ENCODE measurements at regions of chr6 and their contacts with region 1.

Region 1: DNA sequence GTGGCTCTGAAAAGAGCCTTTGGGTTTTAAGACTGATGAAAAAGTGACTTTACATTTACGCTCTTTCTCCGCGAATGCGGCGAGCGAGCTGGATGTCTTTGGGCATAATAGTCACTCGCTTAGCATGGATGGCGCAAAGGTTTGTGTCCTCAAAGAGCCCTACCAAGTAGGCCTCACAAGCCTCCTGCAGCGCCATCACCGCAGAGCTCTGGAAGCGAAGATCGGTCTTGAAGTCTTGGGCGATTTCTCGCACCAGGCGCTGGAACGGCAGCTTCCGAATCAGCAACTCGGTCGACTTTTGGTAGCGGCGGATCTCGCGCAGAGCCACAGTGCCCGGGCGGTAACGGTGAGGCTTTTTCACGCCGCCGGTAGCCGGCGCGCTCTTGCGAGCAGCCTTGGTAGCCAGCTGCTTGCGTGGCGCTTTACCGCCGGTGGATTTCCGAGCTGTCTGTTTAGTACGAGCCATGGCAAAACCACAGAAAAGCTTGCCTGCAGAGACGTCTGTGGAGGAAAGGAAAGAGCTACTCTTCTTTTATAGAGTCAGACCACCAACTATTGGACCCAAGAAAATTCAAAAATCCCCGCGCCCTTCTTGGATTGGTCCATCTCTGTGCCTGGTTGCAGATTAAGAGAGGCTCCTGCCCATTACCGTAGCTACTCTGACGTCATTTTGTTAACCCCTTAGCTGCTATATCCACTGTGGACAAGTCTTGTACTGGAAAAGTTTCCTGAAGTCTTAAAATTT is 55.5 kb upstream of the HFE start:
- DNase-seq: peak; percentile 85

Region 2: GRCh38 chr6:25472306-25472705 is 559.5 kb before region 1 on chr6:
- CTCF ChIA-PET with region 1: no interaction called
- POLR2A ChIA-PET with region 1: no interaction called
- DNase-seq: peak; percentile 24

Region 3: DNA sequence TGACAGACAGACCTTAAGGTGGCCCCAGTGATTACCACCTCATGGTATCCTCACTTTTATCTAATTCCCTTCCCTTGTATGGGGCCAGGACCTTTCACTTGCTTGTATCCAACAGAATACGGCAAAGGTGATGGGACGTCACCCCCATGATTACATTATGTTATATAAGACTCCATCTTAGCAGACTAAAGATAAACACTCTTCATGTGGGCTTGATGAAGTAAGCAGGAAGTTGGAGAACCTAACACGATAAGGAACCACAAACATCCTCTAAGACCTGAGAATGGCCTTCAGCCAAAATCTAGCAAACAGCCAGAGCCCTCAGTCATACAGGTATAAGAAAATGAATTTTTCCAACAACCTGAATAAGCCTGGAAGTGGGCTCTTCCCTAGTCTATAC is 165.8 kb before region 1 on chr6:
- CTCF ChIA-PET with region 1: no interaction called
- POLR2A ChIA-PET with region 1: no interaction called
- DNase-seq: no peak

Region 4: GRCh38 chr6:25992413-25993037 is 39.2 kb before region 1 on chr6:
- CTCF ChIA-PET with region 1: interaction called, 7 read pairs
- POLR2A ChIA-PET with region 1: interaction called, 33 read pairs
- DNase-seq: peak; percentile 88

Region 5: DNA sequence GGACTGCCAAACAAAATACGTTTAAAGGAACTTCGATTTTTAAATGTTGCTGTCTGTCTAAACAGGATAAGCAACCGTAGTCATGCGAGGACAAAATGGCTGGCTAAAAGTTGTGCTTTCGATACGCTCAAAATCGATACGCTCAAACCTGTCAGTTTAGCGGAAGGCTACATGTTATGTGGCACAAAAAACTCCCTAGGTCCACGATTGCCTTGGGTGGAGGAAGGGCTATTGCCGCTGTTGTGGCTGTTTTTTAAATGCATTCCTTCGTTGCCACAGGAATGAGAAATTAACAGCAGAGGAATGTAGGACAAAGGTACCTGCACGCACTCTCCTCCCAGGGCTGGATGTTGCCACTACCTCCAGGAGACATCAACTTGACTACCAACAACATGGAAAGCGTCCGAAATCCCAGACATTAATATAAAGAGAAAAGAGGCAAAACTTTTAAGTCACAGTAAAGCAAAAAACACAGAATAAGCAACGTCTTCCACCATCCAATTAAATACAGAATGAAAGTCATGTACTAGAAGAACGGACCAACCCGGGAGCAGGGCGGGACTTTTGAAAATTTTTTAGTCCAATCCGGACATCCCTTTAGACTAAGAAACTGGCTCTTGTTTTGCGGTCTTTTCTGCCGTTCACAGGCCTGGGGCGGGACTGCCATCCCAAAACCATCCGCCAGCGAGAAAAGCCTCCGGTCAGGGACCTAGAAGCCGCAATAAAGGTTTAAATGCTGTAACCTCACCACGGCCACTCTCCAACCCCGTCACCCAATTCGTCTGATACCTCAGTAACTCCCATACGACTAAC is 23.3 kb after region 1 on chr6:
- CTCF ChIA-PET with region 1: no interaction called
- POLR2A ChIA-PET with region 1: interaction called, 715 read pairs
- DNase-seq: peak; percentile 62

Region 6: GRCh38 chr6:26122793-26123674 is 91.3 kb after region 1 on chr6:
- CTCF ChIA-PET with region 1: no interaction called
- POLR2A ChIA-PET with region 1: interaction called, 92 read pairs
- DNase-seq: peak; percentile 71

Region 7: GRCh38 chr6:26204332-26205165 is 172.8 kb after region 1 on chr6:
- CTCF ChIA-PET with region 1: no interaction called
- POLR2A ChIA-PET with region 1: interaction called, 44 read pairs
- DNase-seq: peak; percentile 86

Region 8: DNA sequence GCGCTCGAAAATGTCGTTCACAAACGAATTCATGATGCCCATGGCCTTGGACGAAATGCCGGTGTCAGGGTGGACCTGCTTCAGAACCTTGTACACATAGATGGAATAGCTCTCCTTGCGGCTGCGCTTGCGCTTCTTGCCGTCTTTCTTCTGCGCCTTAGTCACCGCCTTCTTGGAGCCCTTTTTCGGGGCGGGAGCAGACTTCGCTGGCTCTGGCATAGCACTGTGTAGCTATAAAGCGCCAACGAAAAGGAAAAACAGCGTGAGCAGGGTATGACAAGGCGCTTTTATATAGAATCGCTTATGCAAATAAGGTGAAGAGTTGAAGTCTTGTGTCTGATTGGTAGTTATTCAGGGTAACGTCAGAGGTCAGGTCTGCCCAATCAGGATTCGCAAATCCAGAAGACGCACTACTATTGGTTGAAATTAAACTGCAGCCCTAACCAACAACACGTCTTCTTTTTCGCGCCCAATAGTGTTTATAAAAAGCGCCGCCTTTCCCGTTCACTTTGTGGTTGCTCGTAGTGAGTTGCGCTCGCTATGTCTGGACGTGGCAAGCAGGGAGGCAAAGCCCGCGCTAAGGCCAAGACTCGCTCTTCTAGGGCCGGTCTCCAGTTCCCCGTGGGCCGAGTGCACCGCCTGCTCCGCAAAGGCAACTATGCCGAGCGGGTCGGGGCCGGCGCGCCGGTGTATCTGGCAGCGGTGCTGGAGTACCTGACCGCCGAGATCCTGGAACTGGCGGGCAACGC is 1100.9 kb after region 1 on chr6:
- CTCF ChIA-PET with region 1: no interaction called
- POLR2A ChIA-PET with region 1: interaction called, 26 read pairs
- DNase-seq: peak; percentile 85

Region 9: DNA sequence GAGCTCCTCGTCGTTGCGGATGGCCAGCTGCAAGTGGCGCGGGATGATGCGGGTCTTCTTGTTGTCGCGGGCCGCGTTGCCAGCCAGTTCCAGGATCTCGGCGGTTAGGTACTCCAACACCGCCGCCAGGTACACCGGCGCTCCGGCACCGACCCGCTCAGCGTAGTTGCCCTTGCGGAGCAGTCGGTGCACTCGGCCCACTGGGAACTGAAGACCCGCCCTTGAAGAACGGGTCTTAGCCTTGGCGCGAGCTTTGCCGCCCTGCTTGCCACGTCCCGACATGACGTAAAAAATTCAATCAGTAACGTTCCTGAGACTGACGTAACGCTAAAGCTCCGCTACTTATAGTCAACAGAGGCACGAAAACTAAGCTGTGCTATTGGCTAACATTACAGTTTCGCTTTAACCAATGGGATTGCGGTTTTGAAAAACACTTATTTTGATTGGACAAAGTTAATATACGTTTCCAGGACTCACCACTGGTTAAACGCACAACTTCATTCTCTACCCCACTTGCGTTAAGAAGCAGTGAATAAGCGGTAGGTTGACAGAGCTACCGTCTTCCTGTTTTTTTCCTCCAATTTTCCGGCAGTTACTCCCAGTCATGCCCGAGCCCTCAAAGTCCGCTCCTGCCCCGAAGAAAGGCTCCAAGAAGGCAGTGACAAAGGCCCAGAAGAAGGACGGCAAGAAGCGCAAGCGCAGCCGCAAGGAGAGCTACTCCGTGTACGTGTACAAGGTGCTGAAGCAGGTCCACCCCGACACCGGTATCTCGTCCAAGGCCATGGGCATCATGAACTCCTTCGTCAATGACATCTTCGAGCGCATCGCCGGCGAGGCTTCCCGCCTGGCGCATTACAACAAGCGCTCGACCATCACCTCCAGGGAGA is 1806.5 kb after region 1 on chr6:
- CTCF ChIA-PET with region 1: no interaction called
- POLR2A ChIA-PET with region 1: interaction called, 28 read pairs
- DNase-seq: peak; percentile 79